ENCODE measurements at regions of chr12 and their contacts with region 1.

Region 1: GRCh38 chr12:103956516-103957027 is 9.1 kb upstream of the TDG start:
- DNase-seq: no peak
- H3K4me3 ChIP-seq: peak overlapping the region; percentile 60 to 82 (median 78)
- H3K27ac ChIP-seq: peak overlapping the region; percentile 83 to 89 (median 87)
- H3K4me1 ChIP-seq: peaks cover 15 to 29% (median 28%) of the 10 kb centered on the region in 4 donors
- H3K27me3 ChIP-seq: no peaks in the 10 kb centered on the region
- CTCF ChIP-seq: no peak
- EP300 ChIP-seq: no peak
- POLR2A ChIP-seq: no peak

Region 2: DNA sequence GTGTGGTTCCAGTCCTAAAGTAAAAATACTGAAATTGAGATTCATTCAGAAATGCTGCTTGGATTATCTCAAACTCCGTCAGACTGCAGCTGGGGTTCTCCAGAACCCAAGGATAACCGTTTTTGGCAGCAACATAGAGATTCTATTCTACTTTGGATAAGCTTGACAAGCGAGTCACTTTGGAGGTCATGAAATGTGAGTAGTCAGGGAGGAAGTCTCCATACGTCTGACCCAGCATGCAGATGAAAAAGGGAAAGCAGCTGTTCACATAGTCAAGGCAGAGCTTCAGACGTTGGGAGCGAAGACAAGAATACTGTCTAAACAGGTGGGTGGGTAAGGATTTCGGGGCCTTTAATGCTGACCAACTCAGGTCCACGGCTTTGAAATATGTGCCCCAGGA is 41.3 kb before region 1 on chr12:
- intact Hi-C with region 1: no loop called
- DNase-seq: no peak
- H3K4me3 ChIP-seq: no peak overlapping the region
- H3K27ac ChIP-seq: no peak overlapping the region
- H3K4me1 ChIP-seq: no peaks in the 10 kb centered on the region
- H3K27me3 ChIP-seq: no peaks in the 10 kb centered on the region
- CTCF ChIP-seq: no peak
- EP300 ChIP-seq: no peak
- POLR2A ChIP-seq: no peak

Region 3: DNA sequence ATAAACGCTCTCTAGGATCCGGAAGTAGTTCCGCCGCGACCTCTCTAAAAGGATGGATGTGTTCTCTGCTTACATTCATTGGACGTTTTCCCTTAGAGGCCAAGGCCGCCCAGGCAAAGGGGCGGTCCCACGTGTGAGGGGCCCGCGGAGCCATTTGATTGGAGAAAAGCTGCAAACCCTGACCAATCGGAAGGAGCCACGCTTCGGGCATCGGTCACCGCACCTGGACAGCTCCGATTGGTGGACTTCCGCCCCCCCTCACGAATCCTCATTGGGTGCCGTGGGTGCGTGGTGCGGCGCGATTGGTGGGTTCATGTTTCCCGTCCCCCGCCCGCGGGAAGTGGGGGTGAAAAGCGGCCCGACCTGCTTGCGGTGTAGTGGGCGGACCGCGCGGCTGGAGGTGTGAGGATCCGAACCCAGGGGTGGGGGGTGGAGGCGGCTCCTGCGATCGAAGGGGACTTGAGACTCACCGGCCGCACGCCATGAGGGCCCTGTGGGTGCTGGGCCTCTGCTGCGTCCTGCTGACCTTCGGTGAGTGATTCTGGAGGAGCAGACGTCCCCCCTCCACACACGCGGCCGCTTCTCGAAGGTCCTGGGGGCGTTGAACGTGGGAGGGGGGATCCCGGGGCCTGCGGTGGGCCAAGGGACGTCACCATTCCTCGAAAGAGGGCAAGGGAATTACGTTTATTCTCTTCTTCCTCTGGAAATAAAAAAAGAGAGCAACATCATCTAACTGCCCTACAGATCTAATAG is 26.4 kb before region 1 on chr12 and contains the start of gene HSP90B1:
- intact Hi-C with region 1: loop called (anchors 2 kb)
- DNase-seq: peak; percentile 100
- H3K4me3 ChIP-seq: peak within 1 kb of the TSS; percentile 80 to 89 (median 88)
- H3K27ac ChIP-seq: peak within 1 kb of the TSS; percentile 90 to 97 (median 94)
- H3K4me1 ChIP-seq: peaks cover 34 to 57% (median 47%) of the 10 kb centered on the region in 4 donors
- H3K27me3 ChIP-seq: no peaks in the 10 kb centered on the region
- CTCF ChIP-seq: no peak
- EP300 ChIP-seq: no peak
- POLR2A ChIP-seq: peak; percentile 69
- total RNA-seq, gene HSP90B1: 174 to 199 (median 191) TPM

Region 4: DNA sequence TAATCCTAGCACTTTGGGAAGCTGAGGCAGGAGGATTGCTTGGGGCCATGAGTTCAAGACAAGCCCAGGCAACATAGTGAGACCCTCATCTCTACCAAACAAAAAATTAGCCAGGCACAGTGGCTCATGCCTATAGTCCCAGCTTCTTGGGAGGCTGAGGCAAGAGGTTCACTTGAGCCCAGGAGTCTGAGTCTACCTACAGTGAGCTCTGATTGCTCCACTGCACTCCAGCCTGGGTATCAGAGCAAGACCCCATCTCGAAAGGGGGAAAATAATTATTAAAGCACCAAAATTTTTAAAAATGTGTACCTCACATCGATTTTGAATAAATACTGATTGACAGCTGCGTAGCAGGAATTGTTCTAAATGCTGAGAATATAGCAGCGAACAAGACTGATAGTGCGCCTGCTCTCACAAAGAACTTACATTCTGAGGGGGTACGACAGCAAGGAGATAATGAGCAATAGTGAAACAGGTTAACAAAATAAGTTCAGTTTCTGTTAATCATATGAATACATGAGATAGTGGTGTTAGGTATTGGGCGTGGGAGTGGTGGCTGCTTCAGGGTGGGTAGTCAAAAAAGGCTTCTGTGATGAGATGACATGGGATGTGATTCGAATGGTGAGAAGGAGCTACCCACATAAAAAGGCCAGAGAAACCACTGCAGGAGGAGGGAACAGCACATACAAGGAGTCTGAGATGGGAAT is 127.3 kb after region 1 on chr12:
- intact Hi-C with region 1: no loop called
- DNase-seq: no peak
- H3K4me3 ChIP-seq: no peak overlapping the region
- H3K27ac ChIP-seq: no peak overlapping the region
- H3K4me1 ChIP-seq: peaks cover 0 to 10% (median 3%) of the 10 kb centered on the region in 4 donors
- H3K27me3 ChIP-seq: no peaks in the 10 kb centered on the region
- CTCF ChIP-seq: no peak
- EP300 ChIP-seq: no peak
- POLR2A ChIP-seq: no peak

Region 5: GRCh38 chr12:104478396-104479122 is 522.0 kb after region 1 on chr12:
- intact Hi-C with region 1: no loop called
- DNase-seq: no peak
- H3K4me3 ChIP-seq: no peak overlapping the region
- H3K27ac ChIP-seq: no peak overlapping the region
- H3K4me1 ChIP-seq: peaks cover 0 to 2% (median 0%) of the 10 kb centered on the region in 4 donors
- H3K27me3 ChIP-seq: no peaks in the 10 kb centered on the region
- CTCF ChIP-seq: no peak
- EP300 ChIP-seq: no peak
- POLR2A ChIP-seq: no peak

Measured in esophagus muscularis mucosa (tissue), 4 donors.